ENCODE measurements at regions of chr10 and their contacts with region 1.

Region 1: GRCh38 chr10:101141616-101142532 is 10.8 kb downstream of the TLX1 start:
- DNase-seq: peak; percentile 77 to 91 (median 86)
- H3K4me3 ChIP-seq: no peak overlapping the region
- H3K27ac ChIP-seq: no peak overlapping the region
- H3K4me1 ChIP-seq: peaks cover 0 to 3% of the 10 kb centered on the region in 2 donors
- H3K27me3 ChIP-seq: peaks cover 86% of the 10 kb centered on the region
- CTCF ChIP-seq: peak; percentile 86 to 96 (median 92)
- POLR2A ChIP-seq: no peak

Region 2: GRCh38 chr10:100934084-100934659 is 207.7 kb before region 1 on chr10:
- intact Hi-C with region 1: no loop called
- DNase-seq: no peak
- H3K4me3 ChIP-seq: no peak overlapping the region
- H3K27ac ChIP-seq: no peak overlapping the region
- H3K4me1 ChIP-seq: no peaks in the 10 kb centered on the region
- H3K27me3 ChIP-seq: no peaks in the 10 kb centered on the region
- CTCF ChIP-seq: peak; percentile 9 to 37 (median 34)
- POLR2A ChIP-seq: no peak

Region 3: DNA sequence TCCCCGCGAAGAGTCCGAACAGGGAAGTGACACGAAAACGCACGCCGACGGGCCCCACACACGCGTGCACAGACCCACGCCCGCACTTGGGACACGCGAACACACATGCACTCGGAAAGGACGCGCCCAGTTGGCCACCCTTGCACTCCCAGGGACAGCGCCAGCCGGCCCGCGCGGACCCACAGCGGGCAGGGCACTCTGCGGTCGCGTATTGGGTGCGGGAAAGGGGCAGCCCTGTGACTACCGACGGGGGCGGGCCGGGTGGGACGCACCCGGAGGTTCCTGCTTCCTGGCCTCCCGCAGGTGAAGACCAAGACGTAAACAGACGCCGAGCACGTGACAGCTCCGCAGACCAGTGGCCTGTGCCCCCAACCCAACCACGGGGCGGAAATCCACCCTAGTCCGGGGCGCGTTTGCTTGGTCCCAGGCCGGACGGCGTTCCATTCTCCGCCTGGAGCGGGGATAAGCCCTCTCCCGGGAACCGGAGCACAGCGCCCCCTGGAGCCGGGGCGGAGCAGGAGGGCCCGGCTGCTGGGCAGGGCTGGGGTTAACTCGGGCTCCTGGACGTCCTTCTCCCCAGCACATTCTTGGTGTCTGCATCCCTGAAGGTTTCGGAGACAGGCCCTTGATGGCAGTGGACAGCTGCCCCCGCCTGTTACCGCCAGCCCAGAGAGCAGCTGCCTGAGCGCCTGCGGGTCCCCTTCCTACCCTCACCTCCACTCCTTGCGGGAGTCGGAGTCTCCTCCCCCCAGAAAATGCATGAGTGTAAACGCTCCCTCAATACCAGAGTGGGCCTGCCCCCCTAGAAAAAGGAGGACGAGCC is 144.3 kb before region 1 on chr10:
- intact Hi-C with region 1: no loop called
- DNase-seq: peak; percentile 81 to 89 (median 84)
- H3K4me3 ChIP-seq: peak overlapping the region; percentile 55 to 86 (median 73)
- H3K27ac ChIP-seq: peak overlapping the region; percentile 97 to 100 (median 100)
- H3K4me1 ChIP-seq: peaks cover 24 to 36% of the 10 kb centered on the region in 2 donors
- H3K27me3 ChIP-seq: no peaks in the 10 kb centered on the region
- CTCF ChIP-seq: peak; percentile 79 to 91 (median 87)
- POLR2A ChIP-seq: peak in 1 of 2 donors; percentile 57

Region 4: DNA sequence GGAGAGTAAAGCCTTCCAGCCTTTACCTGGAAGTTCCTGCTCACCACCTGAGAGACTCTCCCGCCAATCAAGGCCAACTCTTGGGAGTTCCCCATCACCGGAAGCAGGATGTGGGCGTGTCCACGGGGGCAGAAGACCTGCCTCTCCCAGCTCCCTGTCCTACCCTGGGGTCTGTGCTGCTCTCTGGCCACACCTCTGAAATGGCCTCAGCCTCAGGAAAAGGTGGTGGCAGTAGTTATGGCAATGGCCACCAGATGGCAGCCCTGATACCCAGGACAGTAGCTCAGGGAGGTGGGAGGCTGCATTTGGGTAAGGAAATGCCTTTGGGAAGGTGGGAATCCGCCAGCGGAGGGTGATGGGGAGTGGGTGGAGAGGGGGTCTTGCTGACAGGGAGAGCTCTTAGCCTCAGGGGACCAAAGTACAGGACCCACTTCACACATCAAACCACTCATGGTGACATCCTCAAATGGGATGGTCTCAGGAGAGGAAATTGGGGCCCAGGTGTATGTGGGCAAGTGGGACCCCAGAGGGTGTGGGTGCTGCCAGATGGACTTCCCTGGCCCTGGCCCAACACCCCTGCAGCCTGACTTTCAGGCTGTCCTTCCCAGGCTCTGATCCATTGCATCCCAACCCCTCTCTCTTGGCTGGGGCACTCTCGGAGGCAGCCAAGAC is 46.2 kb before region 1 on chr10:
- intact Hi-C with region 1: loop called (anchors 2 kb)
- DNase-seq: peak; percentile 59 to 87 (median 70)
- H3K4me3 ChIP-seq: no peak overlapping the region
- H3K27ac ChIP-seq: no peak overlapping the region
- H3K4me1 ChIP-seq: no peaks in the 10 kb centered on the region
- H3K27me3 ChIP-seq: peaks cover 53% of the 10 kb centered on the region
- CTCF ChIP-seq: peak; percentile 67 to 88 (median 78)
- POLR2A ChIP-seq: no peak